PC-3 (cell line): ENCODE measurements at regions of chr13 and their contacts with region 1.

Region 1: DNA sequence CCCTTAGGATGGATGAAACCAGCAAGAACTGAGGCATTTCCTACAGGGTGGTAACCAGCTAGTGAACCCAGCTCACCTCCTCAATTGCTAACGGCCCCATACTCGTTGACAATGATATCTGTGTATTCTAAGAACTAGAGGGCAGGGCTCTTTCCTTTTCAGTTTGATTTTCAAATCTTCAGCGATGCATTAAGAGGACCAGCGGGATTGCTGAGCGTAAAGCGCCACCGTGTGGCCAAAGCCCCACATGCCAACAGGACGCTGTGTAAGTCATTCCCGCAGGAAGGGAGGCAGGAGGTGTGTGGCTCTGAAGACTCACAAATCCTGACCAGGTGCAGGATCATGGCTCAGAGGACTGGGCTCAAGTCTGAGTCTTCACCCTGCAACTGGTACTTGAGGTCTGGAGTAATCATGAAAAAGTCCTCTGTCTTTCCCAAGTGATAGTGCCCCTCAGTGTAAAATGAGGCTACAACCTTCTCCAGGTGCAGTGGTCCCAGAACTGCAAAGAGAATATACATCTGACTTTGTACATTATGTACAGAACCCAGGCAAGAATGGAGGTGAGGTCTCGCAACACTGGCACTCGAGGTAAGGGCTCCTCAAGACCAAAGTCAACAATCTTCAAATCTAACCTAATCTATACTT is 40.9 kb downstream of the C13orf42 start:
- DNase-seq: peak; percentile 85
- ATAC-seq: peak; percentile 95
- H3K4me3 ChIP-seq: no peak overlapping the region
- H3K27ac ChIP-seq: no peak overlapping the region
- H3K4me1 ChIP-seq: no peaks in the 10 kb centered on the region
- H3K27me3 ChIP-seq: no peaks in the 10 kb centered on the region
- CTCF ChIP-seq: peak; percentile 87

Region 2: GRCh38 chr13:50969691-50970090 is 100.4 kb before region 1 on chr13:
- CTCF ChIA-PET with region 1: no interaction called
- POLR2A ChIA-PET with region 1: no interaction called
- intact Hi-C with region 1: loop called (anchors 5 kb)
- DNase-seq: no peak
- ATAC-seq: no peak
- H3K4me3 ChIP-seq: no peak overlapping the region
- H3K27ac ChIP-seq: no peak overlapping the region
- H3K4me1 ChIP-seq: no peaks in the 10 kb centered on the region
- H3K27me3 ChIP-seq: no peaks in the 10 kb centered on the region
- CTCF ChIP-seq: peak; percentile 31; the same call in 1 of the 2 replicates

Region 3: GRCh38 chr13:51663973-51664957 is 594.1 kb after region 1 on chr13:
- CTCF ChIA-PET with region 1: no interaction called
- POLR2A ChIA-PET with region 1: no interaction called
- intact Hi-C with region 1: no loop called
- DNase-seq: peak; percentile 25
- ATAC-seq: peak; percentile 43; the same call in 1 of the 2 replicates
- H3K4me3 ChIP-seq: no peak overlapping the region
- H3K27ac ChIP-seq: no peak overlapping the region
- H3K4me1 ChIP-seq: peaks cover 25% of the 10 kb centered on the region
- H3K27me3 ChIP-seq: no peaks in the 10 kb centered on the region
- CTCF ChIP-seq: no peak